Ascending aorta (tissue), 2 donors: ENCODE measurements at regions of chr3 and their contacts with region 1.

Region 1: DNA sequence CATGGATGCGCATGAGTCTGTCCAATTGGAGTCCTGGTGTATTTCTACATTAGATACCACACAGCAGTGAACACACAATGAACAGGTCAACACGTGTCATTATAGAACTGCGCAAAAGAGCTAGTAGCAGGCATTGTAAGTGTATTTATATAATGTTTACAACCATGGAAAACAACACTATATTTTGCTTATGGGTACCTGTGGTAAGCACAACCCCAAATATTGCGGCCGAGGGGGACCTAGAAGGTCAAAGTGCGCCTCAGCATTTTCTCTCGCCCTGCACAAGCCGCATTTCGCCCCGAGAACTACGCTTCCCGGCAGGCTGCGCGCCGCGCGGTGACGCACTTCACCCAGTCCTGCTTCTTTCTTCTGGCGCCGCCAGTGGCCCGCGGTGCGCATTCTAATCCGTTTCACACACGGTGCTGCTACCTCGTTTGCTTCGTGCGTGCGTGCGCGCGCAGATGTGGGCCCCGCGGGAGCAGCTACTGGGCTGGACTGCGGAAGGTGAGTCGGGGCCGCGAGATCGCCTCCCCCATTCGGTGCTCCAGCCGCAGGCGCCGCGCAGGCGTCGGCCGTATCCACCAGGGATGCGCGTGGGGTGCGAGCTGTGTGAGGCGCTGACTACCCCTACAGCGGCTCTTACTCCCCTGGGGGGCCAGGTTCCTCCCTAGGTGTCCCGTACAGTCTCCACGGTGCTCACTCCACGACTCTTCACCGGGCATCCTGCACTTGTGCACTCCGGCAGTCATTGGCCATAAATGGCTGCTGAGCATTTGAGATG is at the start of gene ZNF589:
- DNase-seq: peak; percentile 59 to 96
- H3K4me3 ChIP-seq: peak within 1 kb of the TSS; percentile 76 to 96
- H3K27ac ChIP-seq: peak within 1 kb of the TSS; percentile 56 to 79
- H3K4me1 ChIP-seq: peaks cover 0 to 8% of the 10 kb centered on the region in 2 donors
- H3K27me3 ChIP-seq: no peaks in the 10 kb centered on the region
- CTCF ChIP-seq: peak in 2 of 3 experiments; percentile 29 to 31
- total RNA-seq, gene ZNF589: 3.7 TPM

Region 2: GRCh38 chr3:48188266-48189201 is 52.4 kb before region 1 on chr3 and contains the start of gene CDC25A:
- intact Hi-C with region 1: loop called (anchors 2 kb)
- DNase-seq: peak; percentile 94 to 98
- H3K4me3 ChIP-seq: peak within 1 kb of the TSS; percentile 71 to 85
- H3K27ac ChIP-seq: peak within 1 kb of the TSS; percentile 21 to 79
- H3K4me1 ChIP-seq: peaks cover 0 to 10% of the 10 kb centered on the region in 2 donors
- H3K27me3 ChIP-seq: no peaks in the 10 kb centered on the region
- CTCF ChIP-seq: no peak
- total RNA-seq, gene CDC25A: not detected

Region 3: GRCh38 chr3:49327485-49327884 is 1086.6 kb after region 1 on chr3:
- intact Hi-C with region 1: no loop called
- DNase-seq: no peak
- H3K4me3 ChIP-seq: no peak overlapping the region
- H3K27ac ChIP-seq: no peak overlapping the region
- H3K4me1 ChIP-seq: no peaks in the 10 kb centered on the region
- H3K27me3 ChIP-seq: no peaks in the 10 kb centered on the region
- CTCF ChIP-seq: no peak